Transverse colon (tissue), 4 donors: ENCODE measurements at regions of chr3 and their contacts with region 1.

Region 1: GRCh38 chr3:76177615-76178014 is 392.3 kb upstream of the ZNF717 start:
- DNase-seq: no peak
- H3K4me3 ChIP-seq: no peak overlapping the region
- H3K27ac ChIP-seq: no peak overlapping the region
- H3K4me1 ChIP-seq: no peaks in the 10 kb centered on the region
- H3K27me3 ChIP-seq: no peaks in the 10 kb centered on the region
- CTCF ChIP-seq: no peak
- EP300 ChIP-seq: no peak
- POLR2A ChIP-seq: no peak

Region 2: DNA sequence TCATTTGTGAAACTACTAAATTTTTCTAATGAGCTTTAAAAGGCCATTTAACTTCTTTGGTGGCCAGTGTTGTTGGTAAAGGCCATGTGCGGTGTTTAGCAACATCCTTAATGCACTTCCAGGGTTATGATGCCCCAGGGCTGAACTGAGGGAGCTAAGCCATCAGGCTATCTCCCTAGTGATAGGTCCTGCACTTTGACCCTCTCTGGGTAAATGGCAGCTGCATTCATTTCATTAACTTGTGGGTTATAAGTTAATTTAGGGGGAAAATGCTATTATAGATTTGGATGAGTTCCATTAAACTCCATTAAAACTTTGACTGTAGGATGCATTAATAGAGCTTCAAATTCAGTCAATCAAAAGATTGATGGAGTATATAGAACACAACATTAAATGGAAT is 25.6 kb before region 1 on chr3:
- in situ Hi-C with region 1: no loop called
- intact Hi-C with region 1: loop called (anchors 2 kb)
- DNase-seq: no peak
- H3K4me3 ChIP-seq: no peak overlapping the region
- H3K27ac ChIP-seq: no peak overlapping the region
- H3K4me1 ChIP-seq: no peaks in the 10 kb centered on the region
- H3K27me3 ChIP-seq: no peaks in the 10 kb centered on the region
- CTCF ChIP-seq: no peak
- EP300 ChIP-seq: no peak
- POLR2A ChIP-seq: no peak